CD14-positive monocyte (primary cell): ENCODE measurements at regions of chr1 and their contacts with region 1.

Region 1: GRCh38 chr1:212062832-212063438 is 27.4 kb downstream of the DTL start:
- DNase-seq: peak; percentile 23 to 58 (median 54)
- H3K4me3 ChIP-seq: no peak overlapping the region
- H3K4me3 Mint-ChIP-seq: no peak overlapping the region
- H3K27ac ChIP-seq: no peak overlapping the region
- H3K27ac Mint-ChIP-seq: no peak overlapping the region
- H3K4me1 ChIP-seq: no peaks in the 10 kb centered on the region
- H3K4me1 Mint-ChIP-seq: no peaks in the 10 kb centered on the region
- H3K27me3 ChIP-seq: no peaks in the 10 kb centered on the region
- H3K27me3 Mint-ChIP-seq: peaks cover 0 to 1% (median 0%) of the 10 kb centered on the region in 3 donors
- CTCF ChIP-seq: peak; percentile 89

Region 2: DNA sequence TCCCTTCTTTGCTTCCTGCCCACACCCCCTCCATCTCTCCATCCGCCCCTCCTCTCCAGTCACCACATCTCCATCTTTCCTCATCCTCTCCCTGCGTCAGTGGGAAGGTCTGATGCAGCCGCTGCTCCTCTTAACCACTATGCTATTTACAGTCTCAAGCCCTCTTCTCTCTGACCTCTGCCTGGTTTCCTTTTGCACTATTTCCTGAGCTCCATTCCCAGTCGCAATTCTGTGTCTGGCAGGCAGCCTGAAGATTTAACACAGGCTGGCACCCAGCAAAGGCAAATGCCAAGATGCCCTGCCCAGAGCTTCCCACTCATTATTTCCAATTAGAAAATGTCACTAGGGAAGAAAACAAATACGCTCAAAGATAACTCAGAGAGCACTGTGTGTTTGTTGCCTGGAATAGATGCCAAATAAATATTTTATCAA is 142.8 kb before region 1 on chr1:
- intact Hi-C with region 1: no loop called
- DNase-seq: no peak
- H3K4me3 ChIP-seq: no peak overlapping the region
- H3K4me3 Mint-ChIP-seq: no peak overlapping the region
- H3K27ac ChIP-seq: no peak overlapping the region
- H3K27ac Mint-ChIP-seq: no peak overlapping the region
- H3K4me1 ChIP-seq: peaks cover 9% of the 10 kb centered on the region in 2 donors
- H3K4me1 Mint-ChIP-seq: peaks cover 28% of the 10 kb centered on the region
- H3K27me3 ChIP-seq: no peaks in the 10 kb centered on the region
- H3K27me3 Mint-ChIP-seq: peaks cover 3 to 17% (median 4%) of the 10 kb centered on the region in 3 donors
- CTCF ChIP-seq: no peak

Region 3: DNA sequence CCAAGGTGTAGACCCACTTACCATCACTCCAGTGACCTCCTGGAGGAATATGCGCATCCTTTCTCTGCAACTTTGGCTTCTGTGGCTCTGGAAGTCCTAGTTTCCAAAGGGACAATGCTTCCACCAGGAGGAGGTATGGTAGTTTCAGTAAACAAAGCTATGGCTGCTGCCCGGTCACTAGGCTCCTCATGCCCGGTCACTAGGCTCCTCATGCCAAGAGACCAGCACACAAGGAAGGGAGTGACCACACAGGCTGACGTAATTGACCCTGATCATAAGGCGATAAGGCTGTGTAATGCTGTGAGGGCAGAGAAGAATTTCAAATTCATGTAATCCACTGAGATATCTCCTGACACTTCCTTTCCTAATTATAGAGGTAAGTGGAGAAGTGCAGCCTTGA is 75.5 kb after region 1 on chr1:
- intact Hi-C with region 1: no loop called
- DNase-seq: no peak
- H3K4me3 ChIP-seq: no peak overlapping the region
- H3K4me3 Mint-ChIP-seq: no peak overlapping the region
- H3K27ac ChIP-seq: no peak overlapping the region
- H3K27ac Mint-ChIP-seq: no peak overlapping the region
- H3K4me1 ChIP-seq: no peaks in the 10 kb centered on the region
- H3K4me1 Mint-ChIP-seq: peaks cover 4% of the 10 kb centered on the region
- H3K27me3 ChIP-seq: no peaks in the 10 kb centered on the region
- H3K27me3 Mint-ChIP-seq: no peaks in the 10 kb centered on the region
- CTCF ChIP-seq: no peak

Region 4: GRCh38 chr1:212291505-212292134 is 228.7 kb after region 1 on chr1:
- intact Hi-C with region 1: loop called (anchors 5 kb)
- DNase-seq: peak; percentile 32 to 60 (median 56)
- H3K4me3 ChIP-seq: no peak overlapping the region
- H3K4me3 Mint-ChIP-seq: peak overlapping the region in 1 of 2 donors; percentile 54
- H3K27ac ChIP-seq: peak overlapping the region in 1 of 2 donors; percentile 27
- H3K27ac Mint-ChIP-seq: peak overlapping the region in 6 of 7 donors; percentile 12 to 82 (median 50)
- H3K4me1 ChIP-seq: peaks cover 54 to 71% of the 10 kb centered on the region in 2 donors
- H3K4me1 Mint-ChIP-seq: peaks cover 77% of the 10 kb centered on the region
- H3K27me3 ChIP-seq: no peaks in the 10 kb centered on the region
- H3K27me3 Mint-ChIP-seq: no peaks in the 10 kb centered on the region
- CTCF ChIP-seq: peak; percentile 74

Region 5: DNA sequence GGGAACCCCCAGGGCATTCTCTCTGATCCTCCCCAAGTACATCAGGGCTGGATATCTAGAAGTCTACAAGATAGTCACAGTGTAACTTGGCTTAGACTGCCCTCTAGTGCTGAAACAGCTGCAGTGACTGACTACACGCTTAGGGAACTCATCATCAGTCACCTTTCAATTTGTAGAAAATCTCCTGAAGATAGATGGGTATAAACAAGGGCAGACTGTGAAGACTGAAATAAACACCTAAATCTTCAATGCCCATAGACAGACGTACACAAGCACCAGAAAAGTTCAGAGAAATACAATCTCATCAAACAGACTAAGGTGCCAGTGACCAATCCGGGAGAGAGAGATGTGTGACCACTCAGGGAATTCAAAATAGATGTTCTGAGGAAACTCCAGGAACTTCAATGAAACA is 305.1 kb after region 1 on chr1:
- intact Hi-C with region 1: loop called (anchors 5 kb)
- DNase-seq: peak; percentile 49 to 69 (median 57)
- H3K4me3 ChIP-seq: no peak overlapping the region
- H3K4me3 Mint-ChIP-seq: no peak overlapping the region
- H3K27ac ChIP-seq: peak overlapping the region in 1 of 2 donors; percentile 60
- H3K27ac Mint-ChIP-seq: peak overlapping the region in 1 of 7 donors; percentile 33
- H3K4me1 ChIP-seq: no peaks in the 10 kb centered on the region
- H3K4me1 Mint-ChIP-seq: no peaks in the 10 kb centered on the region
- H3K27me3 ChIP-seq: no peaks in the 10 kb centered on the region
- H3K27me3 Mint-ChIP-seq: no peaks in the 10 kb centered on the region
- CTCF ChIP-seq: peak; percentile 83